ENCODE measurements at regions of chr3 and their contacts with region 1.

Region 1: GRCh38 chr3:17678116-17678741 is 64.2 kb downstream of the TBC1D5 start:
- DNase-seq: no peak
- H3K4me3 Mint-ChIP-seq: no peak overlapping the region
- H3K27ac Mint-ChIP-seq: no peak overlapping the region
- H3K4me1 Mint-ChIP-seq: peaks cover 7% of the 10 kb centered on the region
- H3K27me3 Mint-ChIP-seq: no peaks in the 10 kb centered on the region

Region 2: DNA sequence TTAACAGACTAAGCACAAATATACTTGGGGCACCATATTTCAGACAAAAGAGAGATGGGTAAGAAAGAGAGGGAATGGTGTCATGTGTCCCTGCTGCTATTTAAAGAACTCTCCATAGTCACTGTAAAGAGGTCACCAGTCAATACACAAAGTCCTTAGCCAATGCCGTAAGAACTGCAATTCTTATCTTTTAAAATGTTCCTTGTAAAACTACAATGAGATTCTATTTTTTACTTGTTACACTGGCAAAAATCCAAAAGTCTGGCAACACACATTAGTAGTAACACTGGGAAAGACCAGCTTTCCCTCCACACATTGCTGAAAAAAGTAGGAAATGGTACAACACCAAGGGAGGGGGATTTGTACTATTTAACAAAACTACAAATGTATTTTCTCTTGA is 125.1 kb before region 1 on chr3:
- intact Hi-C with region 1: loop called (anchors 10 kb)
- DNase-seq: no peak
- H3K4me3 Mint-ChIP-seq: no peak overlapping the region
- H3K27ac Mint-ChIP-seq: no peak overlapping the region
- H3K4me1 Mint-ChIP-seq: no peaks in the 10 kb centered on the region
- H3K27me3 Mint-ChIP-seq: no peaks in the 10 kb centered on the region

Region 3: GRCh38 chr3:17639765-17640164 is 38.5 kb before region 1 on chr3:
- intact Hi-C with region 1: loop called (anchors 5 kb)
- DNase-seq: no peak
- H3K4me3 Mint-ChIP-seq: no peak overlapping the region
- H3K27ac Mint-ChIP-seq: no peak overlapping the region
- H3K4me1 Mint-ChIP-seq: peaks cover 12% of the 10 kb centered on the region
- H3K27me3 Mint-ChIP-seq: no peaks in the 10 kb centered on the region

Region 4: DNA sequence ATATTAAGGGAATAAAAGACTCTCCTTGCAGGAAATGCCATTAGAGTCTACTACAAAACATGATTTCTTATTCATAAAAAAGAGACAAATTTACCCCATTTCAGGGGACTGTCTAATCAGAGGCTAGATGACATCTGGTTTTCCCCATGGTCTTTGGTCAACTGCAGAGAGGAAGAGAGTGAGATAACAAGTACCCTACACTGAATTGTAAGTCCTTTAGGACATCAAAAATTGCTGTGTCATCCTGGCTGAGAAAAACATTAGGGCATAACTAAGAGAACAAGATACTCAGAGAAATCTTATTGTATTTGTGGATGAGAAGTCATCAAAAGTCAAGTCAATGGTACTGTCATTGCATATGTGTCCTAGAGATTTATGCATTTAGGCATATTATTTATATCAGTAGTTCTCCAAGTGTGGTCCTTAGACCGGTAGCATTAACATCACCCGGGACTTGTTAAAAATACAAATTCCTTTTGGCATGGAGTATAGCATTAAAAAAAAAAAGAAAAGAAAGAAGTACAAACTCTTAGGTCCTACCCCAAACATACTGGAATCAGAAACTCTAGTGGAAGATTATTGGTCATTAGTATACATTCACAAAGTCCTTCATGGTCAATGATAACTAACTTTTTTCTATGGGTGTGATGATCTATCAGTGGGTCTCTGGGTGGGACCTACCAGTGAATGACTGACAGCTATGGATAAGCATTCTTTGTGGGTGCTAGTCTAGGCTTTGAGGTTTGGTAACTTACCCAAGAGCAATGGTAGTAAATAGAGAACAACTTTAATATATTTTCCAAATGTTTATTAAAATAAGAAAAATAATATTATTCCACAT is 93.2 kb after region 1 on chr3:
- intact Hi-C with region 1: no loop called
- DNase-seq: no peak
- H3K4me3 Mint-ChIP-seq: no peak overlapping the region
- H3K27ac Mint-ChIP-seq: no peak overlapping the region
- H3K4me1 Mint-ChIP-seq: peaks cover 30% of the 10 kb centered on the region
- H3K27me3 Mint-ChIP-seq: peaks cover 2% of the 10 kb centered on the region